ENCODE measurements at regions of chr7 and their contacts with region 1.

Region 1: DNA sequence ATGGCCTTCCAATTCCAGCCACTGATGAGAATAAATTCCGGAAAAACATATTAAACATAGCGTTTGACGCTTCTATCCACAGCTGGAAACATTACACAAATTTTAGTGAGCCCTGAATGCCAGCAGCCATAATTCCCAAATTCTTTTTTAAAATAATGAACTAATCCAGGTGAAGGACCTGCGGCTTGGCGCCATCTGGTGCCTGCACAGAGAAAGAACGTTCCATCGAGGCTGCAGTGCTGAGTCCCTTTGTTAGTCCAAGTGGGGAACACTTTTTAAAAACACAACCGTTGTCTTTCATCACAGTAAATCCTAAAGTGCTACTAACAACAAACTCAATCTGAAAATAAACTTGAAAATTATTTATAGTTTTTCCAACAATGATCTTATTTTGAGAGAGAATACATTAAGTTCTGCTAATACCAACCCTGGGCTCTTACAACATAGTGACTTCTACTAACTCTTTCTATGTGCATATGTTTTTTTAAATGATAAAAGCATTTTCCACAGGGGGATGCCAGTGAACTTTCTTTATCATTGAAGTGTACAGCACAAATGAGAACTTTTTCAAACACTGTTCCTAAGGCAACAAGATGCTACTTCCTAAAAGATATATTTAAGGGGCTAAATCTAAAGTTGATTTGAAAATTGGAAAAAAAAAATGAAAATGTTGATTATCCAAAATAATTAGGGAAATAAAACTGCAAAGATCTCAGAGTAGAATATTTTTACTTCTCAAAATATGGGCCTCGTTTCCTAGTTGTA is 166.9 kb upstream of the RNF32 start:
- DNase-seq: peak; percentile 26
- H3K4me3 ChIP-seq: no peak overlapping the region
- H3K27ac ChIP-seq: no peak overlapping the region
- H3K4me1 ChIP-seq: no peaks in the 10 kb centered on the region
- H3K27me3 ChIP-seq: no peaks in the 10 kb centered on the region
- CTCF ChIP-seq: peak; percentile 39 to 60 (median 57)
- EP300 ChIP-seq: no peak
- POLR2A ChIP-seq: no peak

Region 2: GRCh38 chr7:155804897-155805825 is 668.5 kb before region 1 on chr7:
- in situ Hi-C with region 1: loop called in 3 of 4 experiments (anchors 10 to 25 kb)
- intact Hi-C with region 1: no loop called
- DNase-seq: peak; percentile 61
- H3K4me3 ChIP-seq: peak overlapping the region in 3 of 4 donors; percentile 9 to 33 (median 31)
- H3K27ac ChIP-seq: peak overlapping the region in 1 of 4 donors; percentile 19
- H3K4me1 ChIP-seq: peaks cover 7 to 62% (median 53%) of the 10 kb centered on the region in 4 donors
- H3K27me3 ChIP-seq: peaks cover 98% of the 10 kb centered on the region
- CTCF ChIP-seq: peak in 4 of 5 experiments; percentile 9 to 67 (median 32)
- EP300 ChIP-seq: no peak
- POLR2A ChIP-seq: no peak

Region 3: DNA sequence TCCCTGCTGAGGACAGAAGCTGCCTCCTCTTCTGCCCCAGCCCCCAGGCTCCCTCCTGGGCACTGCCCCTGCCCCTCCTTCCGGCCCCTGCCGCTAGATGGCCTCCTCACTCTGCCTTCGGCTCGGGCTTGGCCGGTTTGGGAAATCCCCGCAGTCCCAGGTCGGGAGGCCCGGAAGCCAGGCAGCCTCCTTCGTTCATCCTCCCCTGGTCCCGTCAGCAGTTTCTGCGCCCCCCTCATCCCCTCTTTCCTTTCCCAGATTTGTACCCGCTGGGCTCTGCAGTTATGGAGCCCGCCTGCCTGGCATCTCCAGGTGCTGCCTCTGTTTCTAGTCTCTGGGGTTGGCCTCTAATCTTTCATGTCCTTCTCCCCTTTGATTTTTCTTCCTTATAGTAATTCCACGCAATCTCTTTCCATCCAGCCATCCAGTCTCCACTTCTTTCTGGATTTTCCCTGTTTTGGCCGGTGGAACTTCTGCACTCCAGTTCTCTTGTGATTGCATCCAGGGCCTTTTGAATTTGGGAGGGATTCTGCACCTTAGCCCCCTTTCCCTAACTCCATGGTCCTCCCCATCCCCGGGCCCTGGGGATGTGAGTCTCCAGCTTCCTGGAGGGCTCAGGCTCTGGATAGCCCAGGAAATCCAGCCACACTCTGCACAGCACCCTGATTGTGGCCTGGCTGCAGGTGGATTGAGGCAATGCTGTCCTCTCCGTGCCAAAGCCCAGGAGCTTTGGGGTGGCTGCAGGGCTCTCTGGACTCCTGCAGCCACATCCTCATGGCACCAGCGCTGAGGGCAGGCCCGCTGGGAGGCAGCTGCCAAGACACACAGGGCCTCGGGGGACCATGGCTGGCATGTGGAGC is 658.1 kb before region 1 on chr7:
- in situ Hi-C with region 1: loop called in 2 of 4 experiments (anchors 10 to 25 kb)
- intact Hi-C with region 1: no loop called
- DNase-seq: peak; percentile 63
- H3K4me3 ChIP-seq: no peak overlapping the region
- H3K27ac ChIP-seq: no peak overlapping the region
- H3K4me1 ChIP-seq: peaks cover 0 to 23% (median 16%) of the 10 kb centered on the region in 4 donors
- H3K27me3 ChIP-seq: peaks cover 80% of the 10 kb centered on the region
- CTCF ChIP-seq: peak; percentile 28 to 72 (median 60)
- EP300 ChIP-seq: no peak
- POLR2A ChIP-seq: no peak

Region 4: GRCh38 chr7:157116762-157117161 is 643.1 kb after region 1 on chr7:
- in situ Hi-C with region 1: no loop called
- intact Hi-C with region 1: no loop called
- DNase-seq: no peak
- H3K4me3 ChIP-seq: no peak overlapping the region
- H3K27ac ChIP-seq: no peak overlapping the region
- H3K4me1 ChIP-seq: no peaks in the 10 kb centered on the region
- H3K27me3 ChIP-seq: peaks cover 4% of the 10 kb centered on the region
- CTCF ChIP-seq: no peak
- EP300 ChIP-seq: no peak
- POLR2A ChIP-seq: no peak

Measured in transverse colon (tissue), 4 donors.